Right cardiac atrium (tissue), 5 donors: ENCODE measurements at regions of chr5 and their contacts with region 1.

Region 1: GRCh38 chr5:168679515-168679920 is 100.3 kb upstream of the PANK3 start:
- DNase-seq: peak; percentile 77 to 86 (median 80)
- ATAC-seq: peak; percentile 39 to 55
- H3K4me3 ChIP-seq: no peak overlapping the region
- H3K27ac ChIP-seq: no peak overlapping the region
- H3K4me1 ChIP-seq: peaks cover 12% of the 10 kb centered on the region
- H3K27me3 ChIP-seq: no peaks in the 10 kb centered on the region

Region 2: DNA sequence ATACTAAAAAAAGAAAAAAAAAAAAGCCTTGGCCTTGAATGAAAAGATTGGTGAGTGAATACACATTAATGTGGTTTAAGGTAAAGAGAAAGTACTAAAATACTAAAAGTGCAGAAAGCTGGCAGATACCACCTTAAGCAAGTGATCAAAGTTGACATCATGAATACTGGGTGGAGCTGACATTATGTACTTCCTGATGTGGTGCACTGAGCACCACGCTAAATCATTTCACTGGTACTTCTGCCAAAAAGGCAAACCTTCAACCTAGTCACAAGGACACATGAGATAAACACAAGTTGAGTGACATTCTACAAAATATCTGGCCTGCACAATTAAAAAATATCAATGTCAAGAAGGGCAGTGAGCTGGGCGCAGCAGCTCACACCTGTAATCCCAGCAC is 66.5 kb before region 1 on chr5:
- intact Hi-C with region 1: no loop called
- DNase-seq: no peak
- ATAC-seq: peak; percentile 76 to 89
- H3K4me3 ChIP-seq: no peak overlapping the region
- H3K27ac ChIP-seq: no peak overlapping the region
- H3K4me1 ChIP-seq: no peaks in the 10 kb centered on the region
- H3K27me3 ChIP-seq: no peaks in the 10 kb centered on the region

Region 3: DNA sequence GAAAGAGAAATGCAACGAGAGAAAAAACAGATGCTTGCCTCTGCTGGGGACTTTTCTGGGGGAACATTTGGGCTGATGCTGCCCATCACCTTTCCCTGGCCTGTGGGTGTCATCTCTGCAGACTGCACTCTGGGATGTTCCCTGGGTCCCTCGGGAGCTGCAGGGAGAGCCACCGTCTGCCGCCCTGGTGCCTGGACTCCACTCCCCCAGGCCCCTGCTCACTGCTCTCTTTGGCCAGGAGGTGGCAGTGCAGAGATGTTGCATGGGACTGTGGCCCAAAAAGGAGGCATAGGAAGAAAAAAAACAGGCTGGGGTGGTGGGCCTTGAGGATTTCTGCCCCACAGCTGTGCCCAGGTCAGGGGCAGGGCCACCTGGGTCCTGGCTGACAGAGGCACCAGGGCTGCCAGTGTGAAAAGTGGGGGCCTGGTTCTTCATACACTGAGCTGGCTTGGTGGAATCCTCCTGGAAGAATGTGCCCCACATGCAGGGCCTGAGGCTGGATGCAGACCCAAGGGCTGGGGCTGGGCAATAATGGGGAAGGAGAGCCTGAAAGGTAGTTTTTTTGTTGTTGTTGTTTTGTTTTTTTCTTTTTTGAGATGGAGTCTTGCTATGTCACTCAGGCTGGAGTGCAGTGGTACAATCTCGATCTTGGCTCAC is 267.8 kb after region 1 on chr5:
- intact Hi-C with region 1: loop called in 1 of 4 experiments (anchors 5 kb)
- DNase-seq: peak; percentile 36 to 75 (median 73)
- ATAC-seq: peak; percentile 43 to 64
- H3K4me3 ChIP-seq: no peak overlapping the region
- H3K27ac ChIP-seq: no peak overlapping the region
- H3K4me1 ChIP-seq: no peaks in the 10 kb centered on the region
- H3K27me3 ChIP-seq: no peaks in the 10 kb centered on the region

Region 4: DNA sequence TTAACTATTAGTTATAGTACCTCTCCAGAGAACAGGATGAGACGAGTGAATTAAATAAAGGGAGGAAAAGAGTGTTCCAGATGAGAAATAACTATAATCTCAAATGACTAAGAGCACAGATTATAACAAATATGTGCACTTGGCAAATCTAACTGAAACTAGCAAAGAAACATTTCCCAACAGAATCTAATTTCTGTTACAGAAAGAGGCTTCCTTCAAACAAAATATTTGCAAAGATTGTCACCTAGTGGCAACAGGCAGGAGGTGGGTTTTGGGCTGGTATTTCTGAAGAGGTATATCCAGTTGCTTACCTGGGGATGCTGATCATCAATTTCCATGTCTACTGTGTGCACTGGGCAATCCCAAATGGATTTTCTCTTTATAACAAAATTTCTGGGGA is 898.4 kb after region 1 on chr5:
- intact Hi-C with region 1: loop called in 1 of 4 experiments (anchors 10 kb)
- DNase-seq: no peak
- ATAC-seq: no peak
- H3K4me3 ChIP-seq: no peak overlapping the region
- H3K27ac ChIP-seq: no peak overlapping the region
- H3K4me1 ChIP-seq: no peaks in the 10 kb centered on the region
- H3K27me3 ChIP-seq: no peaks in the 10 kb centered on the region